Caco-2 (cell line): ENCODE measurements at regions of chr7 and their contacts with region 1.

Region 1: DNA sequence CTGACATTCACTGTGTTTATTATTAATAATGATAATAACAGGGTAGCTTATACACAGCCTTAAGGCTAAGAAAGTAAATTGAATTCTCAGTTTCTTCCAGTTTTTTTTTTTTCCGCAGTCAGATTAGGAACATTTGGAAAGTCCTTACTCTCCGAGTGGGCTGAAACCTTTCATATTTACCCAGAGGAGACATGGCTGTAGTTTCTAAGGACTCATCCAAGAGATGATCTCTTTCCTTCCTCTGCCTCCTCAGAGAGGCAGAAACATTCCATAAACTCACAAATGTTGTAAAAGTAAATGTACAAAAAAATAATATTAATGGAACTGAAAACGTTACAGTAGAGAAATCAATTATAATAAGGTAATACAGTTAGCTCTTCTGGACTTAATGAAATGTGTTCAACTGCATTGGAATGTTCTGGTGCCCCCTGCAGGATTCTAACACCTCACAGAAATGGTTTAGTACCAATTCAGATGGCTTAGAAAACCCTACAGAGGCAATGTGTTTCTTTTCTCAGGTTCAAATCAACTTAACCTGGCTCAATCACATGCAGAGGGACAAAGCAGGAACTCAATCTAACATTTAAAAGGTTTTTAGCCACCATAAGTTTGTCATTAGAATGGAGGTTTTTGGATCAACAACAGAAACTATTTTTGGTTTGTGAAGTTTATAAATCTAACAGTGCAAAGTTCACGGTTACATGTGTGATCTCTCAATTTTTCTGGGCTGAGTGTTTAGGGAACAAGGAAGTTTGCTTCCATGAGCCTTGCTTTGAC is 71.7 kb downstream of the ICA1 start:
- DNase-seq: peak in 1 of 2 experiments; percentile 59
- H3K4me3 ChIP-seq: no peak overlapping the region
- H3K4me3 Mint-ChIP-seq: no peak overlapping the region
- H3K27ac Mint-ChIP-seq: no peak overlapping the region
- H3K4me1 ChIP-seq: 0 out of 2 replicates have a peak, but pooled peaks cover 6% of the 10 kb centered on the region
- H3K4me1 Mint-ChIP-seq: no peaks in the 10 kb centered on the region
- H3K27me3 ChIP-seq: no peaks in the 10 kb centered on the region
- H3K27me3 Mint-ChIP-seq: no peaks in the 10 kb centered on the region
- CTCF ChIP-seq: peak; percentile 54 to 74

Region 2: GRCh38 chr7:7662527-7662926 is 527.8 kb before region 1 on chr7:
- CTCF ChIA-PET with region 1: no interaction called
- POLR2A ChIA-PET with region 1: no interaction called
- intact Hi-C with region 1: loop called (anchors 1 kb)
- DNase-seq: no peak
- H3K4me3 ChIP-seq: no peak overlapping the region
- H3K4me3 Mint-ChIP-seq: no peak overlapping the region
- H3K27ac Mint-ChIP-seq: no peak overlapping the region
- H3K4me1 ChIP-seq: peaks cover 7% of the 10 kb centered on the region; the same call in 1 of the 2 replicates
- H3K4me1 Mint-ChIP-seq: peaks cover 7% of the 10 kb centered on the region
- H3K27me3 ChIP-seq: no peaks in the 10 kb centered on the region
- H3K27me3 Mint-ChIP-seq: no peaks in the 10 kb centered on the region
- CTCF ChIP-seq: peak in 1 of 2 experiments; percentile 43

Region 3: DNA sequence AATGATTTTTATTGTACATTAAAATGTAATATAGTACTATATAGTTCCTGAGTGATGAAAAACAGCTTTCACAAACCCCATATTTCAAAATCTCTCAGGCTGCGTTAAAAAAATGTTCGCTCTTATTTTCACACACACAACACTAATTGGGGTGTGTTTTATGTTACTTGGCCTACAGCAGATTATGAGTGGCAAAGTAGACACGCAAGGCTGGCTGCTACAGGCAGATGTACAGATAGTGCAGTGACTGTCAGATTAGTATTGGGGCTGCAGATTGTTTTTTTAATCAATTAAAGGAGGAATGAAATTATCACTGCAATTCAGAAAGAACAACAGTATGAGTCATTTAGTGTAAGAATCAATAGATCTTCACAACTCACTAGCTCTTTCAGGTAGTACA is 136.9 kb after region 1 on chr7:
- CTCF ChIA-PET with region 1: no interaction called
- POLR2A ChIA-PET with region 1: no interaction called
- intact Hi-C with region 1: no loop called
- DNase-seq: no peak
- H3K4me3 ChIP-seq: no peak overlapping the region
- H3K4me3 Mint-ChIP-seq: no peak overlapping the region
- H3K27ac Mint-ChIP-seq: no peak overlapping the region
- H3K4me1 ChIP-seq: peaks cover 8% of the 10 kb centered on the region
- H3K4me1 Mint-ChIP-seq: peaks cover 13% of the 10 kb centered on the region
- H3K27me3 ChIP-seq: no peaks in the 10 kb centered on the region
- H3K27me3 Mint-ChIP-seq: no peaks in the 10 kb centered on the region
- CTCF ChIP-seq: no peak